CD8-positive, alpha-beta T cell (primary cell): ENCODE measurements at regions of chr1 and their contacts with region 1.

Region 1: GRCh38 chr1:32933742-32934322 is 30.8 kb downstream of the RNF19B start:
- DNase-seq: no peak
- ATAC-seq: no peak
- H3K4me3 ChIP-seq: no peak overlapping the region
- H3K4me3 Mint-ChIP-seq: no peak overlapping the region
- H3K27ac ChIP-seq: no peak overlapping the region
- H3K27ac Mint-ChIP-seq: no peak overlapping the region
- H3K4me1 ChIP-seq: no peaks in the 10 kb centered on the region
- H3K4me1 Mint-ChIP-seq: no peaks in the 10 kb centered on the region
- H3K27me3 ChIP-seq: no peaks in the 10 kb centered on the region
- H3K27me3 Mint-ChIP-seq: no peaks in the 10 kb centered on the region
- CTCF ChIP-seq: no peak

Region 2: DNA sequence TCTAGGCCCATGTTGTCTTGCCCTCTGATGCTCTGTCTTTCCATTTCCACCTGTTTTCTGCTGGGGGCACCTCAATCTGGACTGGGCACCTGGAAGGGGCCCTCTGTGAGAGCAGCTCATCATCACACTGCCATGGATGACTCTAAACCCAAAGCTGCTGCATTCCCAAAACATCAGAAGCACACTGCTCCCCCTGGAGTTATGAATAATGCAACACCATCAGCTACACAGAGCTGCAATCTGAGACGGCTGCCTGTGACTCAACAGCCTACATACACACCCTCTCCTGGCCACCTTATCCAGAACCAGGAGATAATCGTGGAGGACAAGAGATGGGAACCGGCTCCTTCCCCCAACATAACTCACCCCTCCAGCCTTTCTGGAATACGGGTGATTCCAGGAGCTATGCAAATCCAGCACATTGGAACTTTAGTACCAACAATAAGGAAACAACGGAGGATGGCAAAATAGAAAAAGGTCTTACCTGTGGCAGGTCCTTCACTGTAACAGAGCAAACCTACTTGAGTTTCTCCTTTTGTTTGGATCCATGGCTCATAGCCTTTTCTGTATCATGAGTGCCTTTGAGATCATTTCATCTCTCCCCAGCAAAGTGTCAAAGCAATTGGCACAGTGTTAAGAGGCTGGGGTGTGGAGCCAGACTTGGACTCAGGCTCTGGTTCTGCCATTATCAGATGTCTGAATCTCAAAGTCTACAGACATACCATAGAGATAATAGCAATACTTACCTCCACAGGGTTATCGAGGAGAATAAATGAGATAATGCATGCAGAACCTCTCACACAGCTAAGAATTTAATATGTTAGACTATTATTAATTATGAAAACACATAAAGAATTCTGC is 73.6 kb after region 1 on chr1:
- CTCF ChIA-PET with region 1: interaction called, 59 read pairs
- POLR2A ChIA-PET with region 1: no interaction called
- intact Hi-C with region 1: loop called (anchors 1 kb)
- DNase-seq: peak in 2 of 9 experiments; percentile 23 to 43
- ATAC-seq: no peak
- H3K4me3 ChIP-seq: no peak overlapping the region
- H3K4me3 Mint-ChIP-seq: no peak overlapping the region
- H3K27ac ChIP-seq: no peak overlapping the region
- H3K27ac Mint-ChIP-seq: no peak overlapping the region
- H3K4me1 ChIP-seq: no peaks in the 10 kb centered on the region
- H3K4me1 Mint-ChIP-seq: no peaks in the 10 kb centered on the region
- H3K27me3 ChIP-seq: no peaks in the 10 kb centered on the region
- H3K27me3 Mint-ChIP-seq: no peaks in the 10 kb centered on the region
- CTCF ChIP-seq: no peak

Region 3: GRCh38 chr1:33055210-33056008 is 121.6 kb after region 1 on chr1:
- CTCF ChIA-PET with region 1: interaction called, 81 read pairs
- POLR2A ChIA-PET with region 1: no interaction called
- intact Hi-C with region 1: loop called (anchors 1 kb)
- DNase-seq: peak in 4 of 9 experiments; percentile 12 to 72 (median 56)
- ATAC-seq: peak; percentile 38
- H3K4me3 ChIP-seq: no peak overlapping the region
- H3K4me3 Mint-ChIP-seq: no peak overlapping the region
- H3K27ac ChIP-seq: no peak overlapping the region
- H3K27ac Mint-ChIP-seq: no peak overlapping the region
- H3K4me1 ChIP-seq: no peaks in the 10 kb centered on the region
- H3K4me1 Mint-ChIP-seq: peaks cover 2% of the 10 kb centered on the region
- H3K27me3 ChIP-seq: no peaks in the 10 kb centered on the region
- H3K27me3 Mint-ChIP-seq: peaks cover 6% of the 10 kb centered on the region
- CTCF ChIP-seq: peak; percentile 41

Region 4: GRCh38 chr1:33086384-33086850 is 152.6 kb after region 1 on chr1:
- CTCF ChIA-PET with region 1: interaction called, 46 read pairs
- POLR2A ChIA-PET with region 1: no interaction called
- intact Hi-C with region 1: loop called in 1 of 2 experiments (anchors 10 kb)
- DNase-seq: peak in 7 of 9 experiments; percentile 17 to 61 (median 37)
- ATAC-seq: peak; percentile 44
- H3K4me3 ChIP-seq: no peak overlapping the region
- H3K4me3 Mint-ChIP-seq: no peak overlapping the region
- H3K27ac ChIP-seq: no peak overlapping the region
- H3K27ac Mint-ChIP-seq: no peak overlapping the region
- H3K4me1 ChIP-seq: peaks cover 27% of the 10 kb centered on the region
- H3K4me1 Mint-ChIP-seq: peaks cover 41% of the 10 kb centered on the region
- H3K27me3 ChIP-seq: no peaks in the 10 kb centered on the region
- H3K27me3 Mint-ChIP-seq: no peaks in the 10 kb centered on the region
- CTCF ChIP-seq: no peak

Region 5: DNA sequence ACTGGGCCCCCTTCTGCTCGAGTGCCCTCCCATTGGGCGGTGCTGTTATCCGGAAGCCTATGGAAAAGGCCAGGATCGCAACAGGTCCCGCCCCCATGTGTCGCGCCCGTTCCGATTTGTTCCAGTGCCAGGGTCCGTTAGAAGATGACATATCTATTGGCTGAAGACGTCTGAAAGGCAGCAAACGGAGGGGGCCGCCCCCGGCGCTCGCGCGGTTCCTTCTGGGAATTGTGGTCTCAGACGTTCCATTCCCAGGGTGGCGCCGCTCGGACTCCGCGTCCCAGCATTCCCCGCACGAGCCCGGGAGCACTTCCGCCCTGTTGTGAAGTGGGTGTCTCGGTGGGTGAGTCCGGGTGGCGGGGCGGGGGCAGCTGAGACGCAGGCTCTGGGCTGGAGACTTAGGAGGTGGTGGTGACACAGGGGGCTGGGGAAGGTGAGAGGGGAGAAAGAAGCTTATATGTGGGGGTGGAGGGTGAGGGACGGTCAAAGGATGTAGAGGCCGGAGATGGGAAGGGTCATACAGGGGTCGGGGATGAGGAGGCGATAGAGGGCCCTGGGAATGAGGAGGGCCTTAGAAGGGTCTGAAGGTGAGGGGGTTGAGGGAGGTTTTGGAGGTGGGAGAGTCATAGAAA is 538.6 kb after region 1 on chr1 and contains the start of gene ZSCAN20:
- CTCF ChIA-PET with region 1: no interaction called
- POLR2A ChIA-PET with region 1: no interaction called
- intact Hi-C with region 1: loop called in 1 of 2 experiments (anchors 2 kb)
- DNase-seq: peak; percentile 59 to 92 (median 84)
- ATAC-seq: peak; percentile 98
- H3K4me3 ChIP-seq: peak within 1 kb of the TSS; percentile 29 to 49
- H3K4me3 Mint-ChIP-seq: peak within 1 kb of the TSS; percentile 87
- H3K27ac ChIP-seq: peak within 1 kb of the TSS in 1 of 2 experiments; percentile 67
- H3K27ac Mint-ChIP-seq: peak within 1 kb of the TSS; percentile 80
- H3K4me1 ChIP-seq: peaks cover 10% of the 10 kb centered on the region
- H3K4me1 Mint-ChIP-seq: peaks cover 31% of the 10 kb centered on the region
- H3K27me3 ChIP-seq: no peaks in the 10 kb centered on the region
- H3K27me3 Mint-ChIP-seq: no peaks in the 10 kb centered on the region
- CTCF ChIP-seq: no peak
- total RNA-seq, gene ZSCAN20: 0.19 TPM